ENCODE measurements at regions of chr18 and their contacts with region 1.

Region 1: GRCh38 chr18:53838746-53839145 is 385.7 kb downstream of the MBD2 start:
- DNase-seq: no peak
- H3K4me3 ChIP-seq: no peak overlapping the region
- H3K27ac ChIP-seq: no peak overlapping the region
- H3K4me1 ChIP-seq: no peaks in the 10 kb centered on the region
- H3K27me3 ChIP-seq: no peaks in the 10 kb centered on the region
- CTCF ChIP-seq: no peak

Region 2: GRCh38 chr18:54075689-54076088 is 236.9 kb after region 1 on chr18:
- CTCF ChIA-PET with region 1: interaction called, 15 read pairs
- POLR2A ChIA-PET with region 1: no interaction called
- intact Hi-C with region 1: no loop called
- DNase-seq: no peak
- H3K4me3 ChIP-seq: no peak overlapping the region
- H3K27ac ChIP-seq: no peak overlapping the region
- H3K4me1 ChIP-seq: no peaks in the 10 kb centered on the region
- H3K27me3 ChIP-seq: peaks cover 5% of the 10 kb centered on the region
- CTCF ChIP-seq: no peak

Measured in PC-9 (cell line).